HAP-1 (cell line): ENCODE measurements at regions of chr17 and their contacts with region 1.

Region 1: DNA sequence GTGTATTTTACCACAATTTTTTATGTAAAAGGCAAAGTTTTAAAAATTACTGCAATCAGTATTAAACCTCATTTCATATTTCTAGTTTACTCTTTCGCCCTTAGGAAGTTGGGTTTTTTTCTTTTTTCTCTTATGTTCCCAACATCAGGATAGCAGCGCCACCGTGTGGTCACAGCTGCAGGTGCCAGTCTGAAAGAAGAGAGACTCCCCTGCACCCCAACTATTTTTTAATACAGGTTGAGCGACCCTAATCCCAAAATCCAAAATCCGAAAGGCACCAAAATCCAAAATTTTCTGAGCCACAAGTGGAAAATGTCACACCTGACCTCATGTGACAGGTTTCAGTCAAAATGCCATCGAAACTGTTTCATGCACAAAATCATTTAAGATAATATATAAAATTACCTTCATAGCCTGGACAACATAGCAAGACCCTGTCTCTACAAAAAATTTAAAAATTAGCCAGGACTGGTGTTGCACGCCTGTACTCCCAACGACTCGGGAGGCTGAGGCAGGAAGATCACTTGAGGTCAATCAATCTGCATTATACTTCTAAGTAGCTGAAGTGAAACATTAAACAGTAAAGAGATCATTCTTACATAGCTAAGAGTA is 21.8 kb upstream of the ASGR2 start:
- DNase-seq: peak; percentile 58 to 84
- H3K4me3 ChIP-seq: peak overlapping the region; percentile 13
- H3K4me1 ChIP-seq: peaks cover 6% of the 10 kb centered on the region
- H3K27me3 ChIP-seq: peaks cover 3% of the 10 kb centered on the region; the same call in 1 of the 2 replicates

Region 2: GRCh38 chr17:6913608-6914443 is 222.5 kb before region 1 on chr17:
- in situ Hi-C with region 1: loop called (anchors 25 kb)
- DNase-seq: peak; percentile 42 to 90
- H3K4me3 ChIP-seq: no peak overlapping the region
- H3K4me1 ChIP-seq: no peaks in the 10 kb centered on the region
- H3K27me3 ChIP-seq: peaks cover 31% of the 10 kb centered on the region

Region 3: DNA sequence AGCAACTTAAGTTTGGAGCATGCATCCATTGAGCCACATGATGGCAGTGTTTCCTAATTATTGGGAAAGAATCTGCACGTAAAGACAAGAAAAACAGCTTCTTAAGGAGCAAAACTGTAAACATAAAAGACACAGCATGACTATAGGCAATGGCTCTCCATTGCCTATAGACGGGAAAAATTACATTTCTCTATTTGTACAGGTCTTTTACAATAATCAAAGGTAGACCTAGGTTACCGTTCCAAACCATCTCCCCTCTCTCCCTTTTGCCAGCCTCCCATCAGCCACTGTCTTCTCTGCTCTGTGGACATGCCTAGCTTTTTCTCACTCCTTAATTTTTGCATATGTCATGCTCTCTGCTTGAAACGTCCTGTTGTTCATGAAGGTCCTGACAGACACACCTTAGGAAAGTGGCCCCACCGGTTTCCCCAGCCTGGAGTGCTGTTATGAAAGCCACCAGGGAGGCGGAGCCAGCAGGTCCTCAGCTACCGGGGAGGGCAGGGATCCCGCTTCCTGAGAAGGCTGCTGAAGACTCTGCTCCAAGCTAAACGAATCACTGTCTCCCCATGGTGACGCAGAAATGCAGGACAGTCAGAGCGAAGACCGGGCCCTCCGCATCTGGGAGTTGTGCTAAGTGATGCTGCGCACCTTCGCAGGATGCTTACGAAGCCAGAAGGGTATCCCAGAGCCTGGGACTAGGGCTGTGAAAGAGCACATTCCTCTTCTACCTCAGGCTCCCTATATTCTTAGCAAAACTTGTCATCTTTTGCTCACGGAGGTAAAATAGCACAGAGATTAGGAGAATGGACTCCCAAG is 90.3 kb before region 1 on chr17:
- in situ Hi-C with region 1: loop called (anchors 5 kb)
- DNase-seq: peak; percentile 52 to 69
- H3K4me3 ChIP-seq: no peak overlapping the region
- H3K4me1 ChIP-seq: peaks cover 4% of the 10 kb centered on the region
- H3K27me3 ChIP-seq: no peaks in the 10 kb centered on the region

Region 4: DNA sequence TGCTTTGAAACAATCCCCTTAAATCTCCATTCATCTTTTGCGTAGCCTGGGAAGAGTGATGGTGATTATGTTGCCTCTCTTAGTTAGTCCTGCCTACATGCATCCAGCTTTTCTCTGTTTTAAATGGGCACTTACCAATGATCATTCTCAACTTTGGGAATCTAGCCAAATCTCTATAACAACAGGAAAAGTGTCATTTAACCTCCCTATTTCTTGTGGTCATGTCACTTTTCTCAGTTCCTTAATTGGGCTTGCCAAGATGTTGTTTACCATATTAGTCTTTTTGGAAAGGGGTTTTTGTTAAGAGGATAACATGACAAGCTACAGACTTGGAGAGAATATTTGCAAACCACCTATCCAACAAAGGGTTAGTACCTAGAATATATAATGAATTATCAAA is 40.7 kb before region 1 on chr17:
- in situ Hi-C with region 1: no loop called
- DNase-seq: no peak
- H3K4me3 ChIP-seq: no peak overlapping the region
- H3K4me1 ChIP-seq: no peaks in the 10 kb centered on the region
- H3K27me3 ChIP-seq: peaks cover 17% of the 10 kb centered on the region